ENCODE measurements at regions of chr18 and their contacts with region 1.

Region 1: DNA sequence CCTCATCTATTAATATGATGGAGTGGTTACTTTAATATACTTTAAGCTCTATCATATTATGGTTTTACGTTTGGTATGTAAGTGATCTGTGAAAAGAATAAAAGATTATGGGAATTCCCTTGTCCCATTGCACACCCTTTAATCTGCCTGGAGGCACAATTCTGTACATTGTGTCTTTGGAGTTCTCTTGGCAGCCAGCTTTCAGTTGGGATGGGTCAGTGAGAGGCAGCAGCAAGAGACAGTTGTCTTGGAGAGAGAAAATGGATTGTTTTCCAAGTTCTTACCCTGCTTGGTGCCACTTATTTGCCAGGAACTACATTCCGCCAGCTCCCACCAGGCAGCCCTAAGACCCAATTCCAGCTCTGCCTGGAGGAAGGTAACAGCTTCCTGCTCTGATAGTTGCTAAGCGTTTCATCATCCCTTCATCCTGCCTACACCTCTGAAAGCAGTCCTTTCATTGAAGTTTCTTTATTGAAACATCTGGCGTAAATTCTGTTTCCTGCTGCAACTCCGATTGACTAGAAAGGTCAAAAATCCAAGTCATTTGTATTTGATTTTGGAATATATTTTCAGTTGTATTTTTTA is 365.2 kb downstream of the AKAIN1 start:
- DNase-seq: no peak
- H3K4me3 ChIP-seq: no peak overlapping the region
- H3K27ac ChIP-seq: peak overlapping the region; percentile 22
- H3K4me1 ChIP-seq: peaks cover 4% of the 10 kb centered on the region
- H3K27me3 ChIP-seq: no peaks in the 10 kb centered on the region
- CTCF ChIP-seq: no peak

Region 2: GRCh38 chr18:4631239-4631638 is 200.6 kb before region 1 on chr18:
- CTCF ChIA-PET with region 1: no interaction called
- dilution Hi-C with region 1: no loop called
- in situ Hi-C with region 1: no loop called
- intact Hi-C with region 1: loop called (anchors 10 kb)
- DNase-seq: no peak
- H3K4me3 ChIP-seq: no peak overlapping the region
- H3K27ac ChIP-seq: no peak overlapping the region
- H3K4me1 ChIP-seq: no peaks in the 10 kb centered on the region
- H3K27me3 ChIP-seq: no peaks in the 10 kb centered on the region
- CTCF ChIP-seq: no peak

Region 3: GRCh38 chr18:4847056-4847455 is 15.2 kb after region 1 on chr18:
- CTCF ChIA-PET with region 1: no interaction called
- dilution Hi-C with region 1: no loop called
- in situ Hi-C with region 1: no loop called
- intact Hi-C with region 1: loop called (anchors 1 kb)
- DNase-seq: no peak
- H3K4me3 ChIP-seq: no peak overlapping the region
- H3K27ac ChIP-seq: no peak overlapping the region
- H3K4me1 ChIP-seq: peaks cover 4% of the 10 kb centered on the region
- H3K27me3 ChIP-seq: no peaks in the 10 kb centered on the region
- CTCF ChIP-seq: no peak